A549 (cell line): ENCODE measurements at regions of chr16 and their contacts with region 1.

Region 1: DNA sequence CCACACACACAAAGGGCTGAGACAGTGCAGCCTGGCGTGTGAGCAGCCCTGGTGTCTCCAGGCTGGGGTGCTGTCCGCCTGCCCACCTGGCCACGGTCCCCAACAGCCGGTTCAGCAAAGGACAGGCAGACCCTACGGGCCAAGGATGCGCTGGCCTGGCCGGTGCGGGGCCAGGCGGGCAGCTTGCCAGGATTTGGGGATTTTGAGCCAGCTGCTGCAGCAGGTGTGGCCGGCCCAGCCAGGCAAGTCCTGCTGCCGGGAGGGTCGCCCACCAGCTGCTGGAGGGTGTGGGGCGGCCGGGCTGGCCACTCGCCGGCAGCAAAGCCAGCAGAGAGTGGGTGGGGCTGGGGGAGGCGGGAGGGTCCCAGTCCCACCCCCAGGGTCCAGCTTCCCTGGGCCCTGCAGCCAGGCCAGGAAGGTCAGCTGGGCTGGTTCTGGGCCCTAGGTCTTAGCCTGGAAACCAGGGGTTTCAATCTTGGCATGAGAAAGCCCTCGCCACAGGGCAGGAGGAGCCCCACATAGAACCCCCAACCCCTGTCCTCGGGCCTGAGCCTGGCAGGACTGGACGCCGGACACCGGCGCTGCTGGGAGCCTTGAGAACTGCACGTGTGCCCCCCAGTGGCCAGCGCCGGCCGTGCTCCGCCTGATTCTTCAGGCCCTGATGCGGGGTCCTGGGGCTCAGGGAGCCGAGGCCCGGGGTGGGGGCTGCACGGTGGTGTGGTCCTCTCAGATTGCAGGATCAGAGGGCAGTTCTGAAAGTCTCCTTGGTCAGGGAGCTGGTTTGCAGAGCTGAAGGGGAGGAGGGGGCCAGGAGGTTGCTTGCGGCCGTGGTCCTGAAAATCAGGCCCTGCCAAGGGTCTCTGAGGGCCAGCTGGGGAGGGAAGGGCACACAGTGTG is 17.6 kb upstream of the SSTR5 start:
- DNase-seq: peak; percentile 57 to 77
- ATAC-seq: peak; percentile 74 to 88
- H3K4me3 ChIP-seq: no peak overlapping the region
- H3K27ac ChIP-seq: no peak overlapping the region
- H3K4me1 ChIP-seq: peaks cover 13% of the 10 kb centered on the region
- CTCF ChIP-seq: peak; percentile 83
- EP300 ChIP-seq: no peak
- POLR2A ChIP-seq: no peak
- RAD21 ChIP-seq: peak; percentile 90 to 97

Region 2: DNA sequence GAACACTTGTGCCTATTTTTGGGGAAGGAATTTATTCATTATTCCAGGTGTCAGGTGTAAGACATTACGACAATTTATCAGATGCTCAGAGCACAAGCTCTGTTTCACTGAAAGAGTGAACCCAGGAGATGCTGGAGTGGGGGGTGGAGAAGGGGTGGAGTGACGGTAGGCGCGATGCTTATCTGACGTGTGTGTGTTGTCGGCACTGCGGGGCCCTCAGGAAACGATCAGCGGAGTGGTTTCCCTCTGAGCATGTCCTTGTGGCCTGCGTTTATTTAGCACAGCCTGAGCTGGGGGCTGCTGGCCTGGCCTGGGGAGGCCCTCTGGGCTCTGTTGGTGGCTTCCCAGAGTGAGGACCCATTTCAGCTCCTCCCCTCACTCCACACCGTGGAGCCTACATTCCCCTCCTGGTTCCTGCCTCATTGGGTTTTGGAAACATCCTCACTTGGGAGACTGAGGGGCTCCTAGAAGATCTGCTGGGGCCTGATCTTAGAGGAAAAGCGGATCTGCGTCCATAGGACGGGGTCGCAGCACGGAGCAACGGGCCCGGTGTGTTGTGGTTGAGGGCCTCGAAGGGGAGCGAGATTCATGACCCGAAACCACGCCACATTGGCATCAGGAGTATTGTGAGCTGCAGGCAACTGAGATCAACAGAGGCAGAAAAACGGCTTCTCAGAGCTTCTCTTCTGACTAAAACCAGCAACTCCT is 235.4 kb before region 1 on chr16:
- CTCF ChIA-PET with region 1: interaction called, 91 read pairs
- POLR2A ChIA-PET with region 1: no interaction called
- DNase-seq: no peak
- ATAC-seq: no peak; a peak in 1 of 6 replicates
- H3K4me3 ChIP-seq: no peak overlapping the region
- H3K27ac ChIP-seq: no peak overlapping the region
- H3K4me1 ChIP-seq: peaks cover 6% of the 10 kb centered on the region; the same call in 1 of the 3 replicates
- CTCF ChIP-seq: no peak
- EP300 ChIP-seq: no peak
- POLR2A ChIP-seq: no peak
- RAD21 ChIP-seq: no peak

Region 3: GRCh38 chr16:970766-971581 is 83.9 kb before region 1 on chr16 and contains the start of gene LMF1:
- CTCF ChIA-PET with region 1: interaction called, 37 read pairs
- POLR2A ChIA-PET with region 1: no interaction called
- DNase-seq: peak; percentile 90 to 91
- ATAC-seq: peak; percentile 84 to 94
- H3K4me3 ChIP-seq: peak within 1 kb of the TSS; percentile 97
- H3K27ac ChIP-seq: peak within 1 kb of the TSS; percentile 95 to 96
- H3K4me1 ChIP-seq: 0 out of 3 replicates have a peak, but pooled peaks cover 3% of the 10 kb centered on the region
- CTCF ChIP-seq: no peak
- EP300 ChIP-seq: no peak
- POLR2A ChIP-seq: peak; percentile 78
- RAD21 ChIP-seq: no peak
- polyA plus RNA-seq, gene LMF1: 10.9 and 16.0 TPM in 2 replicates

Region 4: DNA sequence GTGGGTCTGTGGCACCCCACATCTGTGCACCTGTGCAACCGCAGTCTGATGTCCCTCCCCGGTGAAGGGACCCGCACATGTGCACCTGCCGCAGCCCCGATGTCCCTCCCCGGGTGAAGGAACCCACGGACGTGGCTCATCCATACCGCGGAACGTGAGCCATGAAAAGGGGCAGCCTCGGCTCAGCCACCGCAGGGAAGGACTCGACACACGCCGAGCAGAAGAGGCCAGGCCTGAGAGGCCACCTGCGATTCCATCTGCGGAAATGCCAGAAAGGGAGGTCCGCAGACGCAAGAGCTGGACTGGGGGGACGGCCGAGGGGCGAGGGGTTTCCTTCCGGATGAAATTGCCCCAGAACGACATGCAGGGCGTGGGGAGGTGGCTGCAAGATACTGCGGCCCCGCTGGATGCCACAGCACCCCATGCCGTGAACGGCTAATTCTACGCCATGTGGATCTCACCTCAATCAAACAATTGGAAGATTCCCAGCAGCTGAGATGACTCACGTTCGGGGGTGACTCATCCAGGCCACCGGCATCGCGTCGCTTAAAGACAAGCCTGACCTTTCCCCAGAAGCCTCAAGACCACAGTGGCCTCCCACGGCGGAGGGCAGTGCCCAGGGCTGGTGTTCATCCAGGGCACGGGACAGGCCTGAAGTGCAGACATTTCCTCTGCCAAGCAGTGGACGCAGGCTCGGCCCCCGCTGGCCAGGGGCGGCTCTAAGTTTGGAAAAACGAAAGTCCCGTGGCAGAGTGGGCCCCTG is 52.3 kb before region 1 on chr16:
- CTCF ChIA-PET with region 1: interaction called, 32 read pairs
- POLR2A ChIA-PET with region 1: no interaction called
- DNase-seq: peak; percentile 90 to 95
- ATAC-seq: peak; percentile 66 to 73
- H3K4me3 ChIP-seq: peak overlapping the region; percentile 9; the same call in 1 of the 3 replicates
- H3K27ac ChIP-seq: peak overlapping the region; percentile 74 to 88
- H3K4me1 ChIP-seq: peaks cover 45% of the 10 kb centered on the region
- CTCF ChIP-seq: no peak
- EP300 ChIP-seq: no peak; a peak in 1 of 5 replicates
- POLR2A ChIP-seq: no peak
- RAD21 ChIP-seq: no peak

Region 5: DNA sequence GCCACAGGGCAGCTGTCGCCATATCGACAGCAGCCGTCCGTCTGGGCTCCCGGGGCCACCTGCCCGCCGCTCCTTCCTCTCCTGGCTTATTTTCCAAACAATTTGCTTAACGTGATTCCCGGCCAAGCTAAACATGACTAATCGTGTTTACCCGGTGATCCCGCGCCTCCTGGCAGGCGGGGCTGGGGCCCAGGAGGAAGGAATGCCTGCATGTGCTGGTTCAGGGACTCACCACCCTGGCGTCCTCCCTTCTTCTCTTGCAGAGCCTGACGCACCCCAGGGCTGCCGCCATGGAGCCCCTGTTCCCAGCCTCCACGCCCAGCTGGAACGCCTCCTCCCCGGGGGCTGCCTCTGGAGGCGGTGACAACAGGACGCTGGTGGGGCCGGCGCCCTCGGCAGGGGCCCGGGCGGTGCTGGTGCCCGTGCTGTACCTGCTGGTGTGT is 23.7 kb after region 1 on chr16:
- CTCF ChIA-PET with region 1: interaction called, 174 read pairs
- POLR2A ChIA-PET with region 1: no interaction called
- DNase-seq: peak; percentile 87 to 93
- ATAC-seq: peak; percentile 72 to 84
- H3K4me3 ChIP-seq: peak overlapping the region; percentile 12; the same call in 1 of the 3 replicates
- H3K27ac ChIP-seq: peak overlapping the region; percentile 24 to 72; a peak in 3 of 6 replicates
- H3K4me1 ChIP-seq: peaks cover 49% of the 10 kb centered on the region
- CTCF ChIP-seq: no peak
- EP300 ChIP-seq: no peak
- POLR2A ChIP-seq: no peak
- RAD21 ChIP-seq: no peak

Region 6: DNA sequence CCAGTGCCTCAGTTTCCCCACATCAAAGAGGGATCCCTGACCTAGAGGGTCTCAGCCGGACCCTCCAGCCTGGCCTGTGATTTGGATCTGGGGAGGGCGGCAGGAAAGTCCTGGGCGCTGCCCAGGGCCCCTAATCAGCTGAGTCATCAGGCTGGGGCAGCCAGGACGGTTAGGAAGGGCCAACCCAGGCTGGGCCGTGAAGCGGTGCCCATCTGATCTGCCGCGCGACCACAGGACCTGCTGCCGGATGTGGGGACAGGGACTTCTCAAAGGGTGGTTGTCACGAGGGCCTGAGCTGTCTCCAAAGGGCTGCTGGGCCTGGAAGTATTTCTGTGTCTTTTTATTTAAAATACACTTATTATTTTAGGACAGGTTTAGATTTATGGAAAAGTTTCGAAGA is 190.0 kb after region 1 on chr16:
- CTCF ChIA-PET with region 1: interaction called, 19 read pairs
- POLR2A ChIA-PET with region 1: no interaction called
- DNase-seq: no peak
- ATAC-seq: no peak
- H3K4me3 ChIP-seq: no peak overlapping the region
- H3K27ac ChIP-seq: 0 out of 6 replicates have a peak overlapping the region, but pooled peaks of 1 of the 2 experiments have one; percentile 39
- H3K4me1 ChIP-seq: no peaks in the 10 kb centered on the region
- CTCF ChIP-seq: no peak
- EP300 ChIP-seq: no peak
- POLR2A ChIP-seq: no peak
- RAD21 ChIP-seq: no peak

Region 7: GRCh38 chr16:1345087-1345486 is 290.2 kb after region 1 on chr16:
- CTCF ChIA-PET with region 1: no interaction called
- POLR2A ChIA-PET with region 1: no interaction called
- DNase-seq: no peak
- ATAC-seq: no peak
- H3K4me3 ChIP-seq: no peak overlapping the region
- H3K27ac ChIP-seq: no peak overlapping the region
- H3K4me1 ChIP-seq: peaks cover 11% of the 10 kb centered on the region
- CTCF ChIP-seq: no peak
- EP300 ChIP-seq: no peak
- POLR2A ChIP-seq: no peak
- RAD21 ChIP-seq: no peak